Heart right ventricle (tissue), 16 donors: ENCODE measurements at regions of chr5 and their contacts with region 1.

Region 1: GRCh38 chr5:31680528-31680927 is 41.6 kb downstream of the PDZD2 start:
- DNase-seq: peak; percentile 73 to 75
- ATAC-seq: peak; percentile 75 to 92 (median 85)
- H3K4me3 ChIP-seq: no peak overlapping the region
- H3K27ac ChIP-seq: peak overlapping the region in 9 of 10 donors; percentile 33 to 76 (median 57)
- H3K4me1 ChIP-seq: peaks cover 0 to 50% (median 17%) of the 10 kb centered on the region in 9 donors
- H3K27me3 ChIP-seq: no peaks in the 10 kb centered on the region
- CTCF ChIP-seq: peak in 2 of 9 donors; percentile 15 to 16

Region 2: DNA sequence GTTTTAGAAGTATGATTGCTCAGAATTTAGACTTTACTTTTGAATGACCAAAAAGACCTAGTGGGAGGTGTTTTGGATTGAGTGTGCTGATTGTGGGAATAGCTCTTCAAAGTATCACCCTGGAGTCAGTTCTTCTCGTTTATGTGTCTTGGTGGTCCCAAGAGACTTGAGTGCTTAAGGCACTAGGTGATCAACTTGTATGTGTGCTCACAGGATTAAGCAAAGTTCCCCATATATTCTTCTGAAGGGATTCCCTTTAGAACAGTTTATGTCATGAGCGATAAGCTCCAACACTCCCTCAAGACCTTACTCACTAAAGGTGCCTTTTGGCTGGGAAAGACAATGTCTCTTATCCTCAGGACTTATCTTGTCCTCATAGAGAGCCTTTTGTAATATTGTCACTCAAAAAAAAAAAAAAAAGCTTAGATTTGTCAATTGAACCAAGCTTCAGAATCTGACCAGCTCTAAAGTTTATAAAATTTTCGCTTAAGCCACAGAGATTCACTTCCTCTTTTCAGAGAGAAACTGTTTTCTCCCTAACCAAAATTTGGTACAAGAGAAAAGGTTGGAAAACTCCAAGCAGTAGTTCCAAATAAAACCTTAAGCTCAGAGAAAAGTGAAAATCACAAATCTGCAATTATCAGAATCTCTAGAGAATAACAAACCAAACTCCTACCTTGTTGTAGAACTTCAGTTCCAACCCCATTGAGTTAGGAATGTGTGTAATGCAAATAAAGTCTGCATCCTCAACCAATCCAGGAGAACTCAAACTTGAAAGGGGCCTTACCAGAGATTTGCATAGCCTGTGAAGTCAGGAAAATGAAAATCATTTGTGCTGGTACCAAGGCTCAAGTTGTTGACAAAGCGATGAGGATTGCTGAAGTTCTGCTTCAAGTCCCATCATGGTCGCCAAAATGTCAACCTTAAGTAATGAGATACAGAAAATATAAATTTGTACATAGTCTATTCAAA is 81.6 kb before region 1 on chr5:
- intact Hi-C with region 1: no loop called
- DNase-seq: no peak
- ATAC-seq: no peak
- H3K4me3 ChIP-seq: no peak overlapping the region
- H3K27ac ChIP-seq: no peak overlapping the region
- H3K4me1 ChIP-seq: peaks cover 0 to 5% (median 0%) of the 10 kb centered on the region in 9 donors
- H3K27me3 ChIP-seq: peaks cover 0 to 2% (median 0%) of the 10 kb centered on the region in 7 donors
- CTCF ChIP-seq: no peak

Region 3: GRCh38 chr5:31638748-31639418 is 41.6 kb before region 1 on chr5 and contains the start of gene PDZD2:
- intact Hi-C with region 1: loop called in 2 of 10 experiments (anchors 5 to 10 kb)
- DNase-seq: peak; percentile 86 to 89
- ATAC-seq: peak; percentile 75 to 85 (median 82)
- H3K4me3 ChIP-seq: peak within 1 kb of the TSS; percentile 30 to 92 (median 79)
- H3K27ac ChIP-seq: peak within 1 kb of the TSS; percentile 51 to 86 (median 78)
- H3K4me1 ChIP-seq: peaks cover 13 to 83% (median 47%) of the 10 kb centered on the region in 9 donors
- H3K27me3 ChIP-seq: peaks cover 0 to 26% (median 0%) of the 10 kb centered on the region in 7 donors
- CTCF ChIP-seq: peak in 8 of 9 donors; percentile 10 to 66 (median 41)
- total RNA-seq, gene PDZD2: 41.6 to 117 (median 89.0) TPM

Region 4: GRCh38 chr5:31770998-31771397 is 90.5 kb after region 1 on chr5:
- intact Hi-C with region 1: loop called in 1 of 10 experiments (anchors 10 kb)
- DNase-seq: no peak
- ATAC-seq: no peak
- H3K4me3 ChIP-seq: no peak overlapping the region
- H3K27ac ChIP-seq: peak overlapping the region in 4 of 10 donors; percentile 2 to 74 (median 38)
- H3K4me1 ChIP-seq: peaks cover 4 to 77% (median 43%) of the 10 kb centered on the region in 9 donors
- H3K27me3 ChIP-seq: no peaks in the 10 kb centered on the region
- CTCF ChIP-seq: no peak